ENCODE measurements at regions of chr17 and their contacts with region 1.

Region 1: GRCh38 chr17:61088553-61088952 is 311.1 kb upstream of the TBX2 start:
- DNase-seq: no peak
- ATAC-seq: no peak
- H3K4me3 ChIP-seq: no peak overlapping the region
- H3K27ac ChIP-seq: no peak overlapping the region
- H3K4me1 ChIP-seq: no peaks in the 10 kb centered on the region
- H3K27me3 ChIP-seq: no peaks in the 10 kb centered on the region
- CTCF ChIP-seq: no peak

Region 2: GRCh38 chr17:61106354-61106753 is 17.8 kb after region 1 on chr17:
- CTCF ChIA-PET with region 1: no interaction called
- POLR2A ChIA-PET with region 1: interaction called, 13 read pairs
- in situ Hi-C with region 1: no loop called
- intact Hi-C with region 1: no loop called
- DNase-seq: no peak
- ATAC-seq: no peak
- H3K4me3 ChIP-seq: no peak overlapping the region
- H3K27ac ChIP-seq: no peak overlapping the region
- H3K4me1 ChIP-seq: peaks cover 3% of the 10 kb centered on the region; the same call in 1 of the 2 replicates
- H3K27me3 ChIP-seq: no peaks in the 10 kb centered on the region
- CTCF ChIP-seq: no peak